Panc1 (cell line): ENCODE measurements at regions of chr7 and their contacts with region 1.

Region 1: DNA sequence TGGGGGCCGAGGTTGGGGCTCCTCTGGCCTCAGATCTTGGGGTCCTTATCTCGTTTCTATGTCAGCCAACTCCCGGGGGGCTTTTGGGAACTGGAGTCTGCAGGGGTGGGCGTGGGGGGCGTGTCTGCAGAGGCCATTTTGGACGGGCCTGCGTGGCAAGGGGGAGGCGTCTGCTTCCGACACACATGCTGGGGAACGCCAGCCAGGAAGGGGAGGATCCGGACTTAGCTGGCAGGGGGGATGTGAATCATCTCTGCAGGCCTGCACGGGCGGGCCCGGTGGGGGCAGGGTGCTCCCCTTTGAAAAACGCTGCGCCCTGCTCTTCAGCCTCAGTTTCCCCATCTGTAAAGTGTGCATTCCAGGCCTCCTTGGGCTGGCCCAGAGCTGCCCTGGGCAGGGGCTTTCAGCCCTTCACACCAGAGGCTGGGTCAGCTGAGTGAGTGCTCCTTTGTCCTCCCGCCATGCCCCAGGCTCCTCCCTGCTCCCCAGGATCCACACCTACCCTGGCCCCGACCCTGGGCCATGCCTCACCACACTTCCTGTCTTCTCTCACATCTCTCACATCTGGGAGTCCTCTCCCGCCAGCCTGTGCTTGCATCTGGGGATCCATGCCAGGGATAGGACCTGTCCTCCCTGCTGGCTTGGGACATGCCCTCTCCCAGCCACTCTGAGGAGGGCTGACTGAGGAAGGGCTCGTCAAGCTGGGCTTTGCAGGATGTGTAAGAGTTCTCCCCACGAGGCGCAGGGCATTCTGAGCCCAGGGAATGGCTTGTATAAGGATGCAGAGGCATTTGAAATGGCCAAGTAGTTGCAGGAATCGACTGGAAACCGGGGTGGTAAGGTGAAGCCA is 172.6 kb upstream of the TNRC18 start:
- DNase-seq: peak; percentile 69
- ATAC-seq: peak; percentile 54
- H3K4me3 ChIP-seq: peak overlapping the region; percentile 84 to 89
- H3K27ac ChIP-seq: peak overlapping the region; percentile 95
- H3K4me1 ChIP-seq: peaks cover 60% of the 10 kb centered on the region
- H3K27me3 ChIP-seq: no peaks in the 10 kb centered on the region
- CTCF ChIP-seq: no peak

Region 2: GRCh38 chr7:5396999-5397663 is 199.1 kb before region 1 on chr7:
- CTCF ChIA-PET with region 1: interaction called, 12 read pairs
- POLR2A ChIA-PET with region 1: no interaction called
- in situ Hi-C with region 1: no loop called
- intact Hi-C with region 1: no loop called
- DNase-seq: no peak
- ATAC-seq: peak; percentile 86
- H3K4me3 ChIP-seq: peak overlapping the region; percentile 47 to 63
- H3K27ac ChIP-seq: peak overlapping the region; percentile 94
- H3K4me1 ChIP-seq: peaks cover 29% of the 10 kb centered on the region
- H3K27me3 ChIP-seq: no peaks in the 10 kb centered on the region
- CTCF ChIP-seq: no peak

Region 3: DNA sequence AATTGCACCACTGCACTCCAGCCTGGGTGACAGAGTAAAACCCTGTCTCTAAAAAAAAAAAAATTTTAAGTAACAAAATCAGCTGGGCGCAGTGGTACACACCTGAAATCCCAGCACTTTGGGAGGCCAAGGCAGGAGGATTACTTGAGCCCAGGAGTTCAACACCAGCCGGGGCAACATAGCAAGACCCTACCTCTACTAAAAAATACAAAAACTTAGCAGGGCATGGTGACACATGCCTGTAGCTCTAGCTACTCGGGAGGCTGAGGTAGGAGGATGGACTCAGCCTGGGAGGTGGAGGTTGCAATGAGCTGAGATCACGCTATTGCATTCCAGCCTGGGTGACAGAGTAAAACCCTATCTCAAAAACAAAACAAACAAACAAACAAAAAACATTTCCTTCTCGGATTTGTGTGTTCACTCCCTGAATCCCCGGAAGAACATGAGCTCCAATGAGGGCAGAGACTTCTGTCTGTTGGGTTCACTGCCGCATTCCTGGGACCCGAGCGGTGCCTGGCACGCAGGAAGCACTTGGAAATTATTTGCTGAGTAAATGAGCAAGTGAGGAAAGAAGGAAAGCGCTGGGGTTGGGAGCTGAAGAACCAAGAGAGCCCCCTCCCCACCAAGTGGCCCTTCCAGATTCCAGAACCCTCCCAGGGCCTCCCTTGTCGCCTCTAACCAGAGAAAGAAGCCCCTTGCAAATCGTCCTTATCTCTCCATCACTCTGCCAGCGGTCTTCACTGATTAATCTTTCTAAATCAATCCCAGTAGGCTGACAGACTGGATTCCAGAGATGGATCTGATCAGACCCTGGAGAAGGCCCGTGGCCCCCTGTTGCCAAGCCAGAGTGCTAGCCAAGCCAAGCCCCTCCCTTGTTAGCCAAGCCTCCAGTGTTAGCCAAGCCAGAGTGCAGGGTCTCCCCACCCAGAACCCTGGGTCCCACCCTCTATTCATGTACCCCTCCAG is 178.9 kb before region 1 on chr7:
- CTCF ChIA-PET with region 1: no interaction called
- POLR2A ChIA-PET with region 1: no interaction called
- in situ Hi-C with region 1: no loop called
- intact Hi-C with region 1: no loop called
- DNase-seq: no peak
- ATAC-seq: peak; percentile 17
- H3K4me3 ChIP-seq: peak overlapping the region; percentile 78 to 91; a peak in 2 of 4 replicates
- H3K27ac ChIP-seq: peak overlapping the region; percentile 98
- H3K4me1 ChIP-seq: peaks cover 46% of the 10 kb centered on the region
- H3K27me3 ChIP-seq: no peaks in the 10 kb centered on the region
- CTCF ChIP-seq: no peak